Heart right ventricle (tissue), 16 donors: ENCODE measurements at regions of chr10 and their contacts with region 1.

Region 1: DNA sequence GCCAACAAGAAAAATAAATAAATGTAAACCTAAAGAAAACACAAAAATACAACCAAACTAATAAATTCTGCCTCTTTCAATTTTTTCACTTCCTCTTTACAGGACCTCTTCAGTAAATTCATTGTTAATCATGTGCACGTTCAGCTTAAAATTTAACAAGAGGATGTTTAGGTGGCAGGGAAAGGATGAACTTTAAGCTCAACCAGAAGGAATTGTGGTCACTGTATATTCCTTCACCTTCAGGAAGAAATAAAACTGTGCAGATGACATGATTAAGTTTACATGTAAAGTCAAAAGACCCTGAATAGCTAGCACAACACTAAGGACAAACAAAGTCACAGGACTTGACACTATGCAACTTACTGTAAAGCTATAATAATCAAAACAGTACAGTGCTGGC is 33.0 kb downstream of the KIF5B start:
- DNase-seq: no peak
- ATAC-seq: no peak
- H3K4me3 ChIP-seq: no peak overlapping the region
- H3K27ac ChIP-seq: no peak overlapping the region
- H3K4me1 ChIP-seq: no peaks in the 10 kb centered on the region
- H3K27me3 ChIP-seq: no peaks in the 10 kb centered on the region
- CTCF ChIP-seq: no peak

Region 2: DNA sequence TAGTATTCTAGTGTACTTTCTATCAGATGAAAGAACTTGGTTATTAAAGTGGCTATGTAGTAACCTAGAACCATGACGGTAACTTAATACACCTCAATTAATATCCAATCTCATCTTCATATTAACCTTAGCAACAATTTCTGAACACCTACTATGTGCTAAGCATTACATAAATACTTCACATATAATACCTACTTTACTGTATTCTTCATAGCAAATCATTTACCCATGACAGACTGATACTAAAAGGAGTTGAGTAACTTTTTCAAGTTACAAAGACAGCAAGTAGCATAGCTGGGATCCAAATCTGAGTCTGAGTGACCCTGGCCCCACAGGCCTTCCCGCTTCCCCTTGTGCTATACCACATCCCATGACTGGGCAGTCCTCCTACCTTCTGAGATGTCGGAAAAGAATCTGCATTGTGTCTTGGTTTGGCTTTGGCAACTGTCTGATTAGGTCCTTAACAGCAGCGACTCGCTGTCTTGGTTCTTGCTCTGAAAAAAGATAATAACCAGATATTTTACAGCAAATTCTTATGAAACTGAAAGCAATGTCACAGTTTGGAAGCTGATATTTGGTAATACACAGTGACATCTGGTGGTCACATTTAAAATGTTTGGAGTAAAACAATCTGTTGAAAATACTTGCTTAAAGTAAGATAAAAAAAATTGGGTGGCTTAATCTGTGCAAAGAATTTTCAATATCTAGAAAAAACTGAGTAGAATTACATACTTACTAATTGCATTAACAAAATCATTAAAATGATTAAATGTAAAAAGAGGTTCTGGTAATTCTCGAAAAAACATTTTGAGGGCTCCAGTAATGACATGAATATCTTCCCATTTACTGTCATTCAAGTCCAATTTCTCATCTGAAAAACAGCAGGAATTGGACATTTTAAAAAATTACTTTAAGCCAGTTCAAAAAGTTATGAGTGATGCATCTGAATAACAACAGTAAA is 214.7 kb before region 1 on chr10:
- intact Hi-C with region 1: no loop called
- DNase-seq: peak in 1 of 2 donors; percentile 39
- ATAC-seq: peak in 7 of 8 donors; percentile 75 to 90 (median 82)
- H3K4me3 ChIP-seq: peak overlapping the region in 9 of 10 donors; percentile 26 to 55 (median 47)
- H3K27ac ChIP-seq: peak overlapping the region; percentile 25 to 86 (median 77)
- H3K4me1 ChIP-seq: peaks cover 0 to 22% (median 11%) of the 10 kb centered on the region in 9 donors
- H3K27me3 ChIP-seq: no peaks in the 10 kb centered on the region
- CTCF ChIP-seq: peak; percentile 38 to 78 (median 66)

Region 3: GRCh38 chr10:31952066-31952465 is 71.2 kb before region 1 on chr10:
- intact Hi-C with region 1: no loop called
- DNase-seq: no peak
- ATAC-seq: no peak
- H3K4me3 ChIP-seq: no peak overlapping the region
- H3K27ac ChIP-seq: no peak overlapping the region
- H3K4me1 ChIP-seq: peaks cover 0 to 16% (median 0%) of the 10 kb centered on the region in 9 donors
- H3K27me3 ChIP-seq: no peaks in the 10 kb centered on the region
- CTCF ChIP-seq: no peak

Region 4: GRCh38 chr10:32279795-32280194 is 256.5 kb after region 1 on chr10:
- intact Hi-C with region 1: loop called in 1 of 10 experiments (anchors 10 kb)
- DNase-seq: no peak
- ATAC-seq: no peak
- H3K4me3 ChIP-seq: no peak overlapping the region
- H3K27ac ChIP-seq: no peak overlapping the region
- H3K4me1 ChIP-seq: peaks cover 0 to 14% (median 0%) of the 10 kb centered on the region in 9 donors
- H3K27me3 ChIP-seq: no peaks in the 10 kb centered on the region
- CTCF ChIP-seq: no peak